Dorsolateral prefrontal cortex (tissue), 120 donors: ENCODE measurements at regions of chr21 and their contacts with region 1.

Region 1: GRCh38 chr21:31476263-31477022 is 132.4 kb upstream of the TIAM1 start:
- DNase-seq: peak in 2 of 10 donors; percentile 20 to 25
- H3K4me3 ChIP-seq: peak overlapping the region in 1 of 59 donors; percentile 10
- H3K27ac ChIP-seq: peak overlapping the region in 52 of 59 donors; percentile 1 to 100 (median 54)
- H3K27me3 ChIP-seq: no peaks in the 10 kb centered on the region
- CTCF ChIP-seq: peak in 31 of 56 donors; percentile 10 to 48 (median 30)

Region 2: DNA sequence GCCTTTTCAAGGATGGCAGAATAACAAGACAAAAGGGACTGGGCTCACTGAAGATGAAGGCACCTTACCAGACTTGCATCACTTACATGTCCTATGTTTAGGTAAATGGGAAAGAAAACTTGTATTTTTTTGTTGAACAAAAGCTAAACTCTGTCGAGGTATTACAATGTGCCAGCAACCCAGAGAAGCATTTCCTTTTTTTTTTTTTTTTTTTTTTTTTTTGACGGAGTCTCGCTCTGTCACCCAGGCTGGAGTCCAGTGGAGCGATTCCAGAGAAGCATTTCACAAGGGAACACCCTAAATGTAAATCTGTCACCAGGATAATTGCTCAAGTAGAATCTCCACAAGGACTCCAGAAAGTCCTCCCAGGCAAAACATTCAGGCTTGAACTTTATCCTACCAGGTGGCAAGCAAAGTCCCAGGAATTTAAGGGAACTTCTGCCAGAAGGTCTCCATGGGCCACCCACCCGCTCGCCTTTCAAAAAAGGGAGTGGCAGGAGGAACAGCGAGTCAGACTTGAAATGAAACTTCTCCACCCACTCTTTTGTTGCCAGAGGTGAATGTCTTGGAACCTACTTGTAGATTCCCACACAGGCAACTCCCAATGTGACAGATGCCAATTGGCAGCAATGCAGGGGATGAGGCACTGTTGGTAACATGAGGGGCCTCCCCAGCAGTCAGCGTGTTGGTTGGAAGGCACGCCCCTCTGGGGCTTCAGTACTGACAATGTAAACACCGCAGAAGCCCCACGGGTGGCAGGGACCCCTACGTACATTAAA is 257.4 kb before region 1 on chr21:
- intact Hi-C with region 1: loop called in 1 of 2 experiments (anchors 10 kb)
- DNase-seq: no peak
- H3K4me3 ChIP-seq: no peak overlapping the region
- H3K27ac ChIP-seq: peak overlapping the region in 1 of 59 donors; percentile 21
- H3K27me3 ChIP-seq: no peaks in the 10 kb centered on the region
- CTCF ChIP-seq: no peak

Region 3: DNA sequence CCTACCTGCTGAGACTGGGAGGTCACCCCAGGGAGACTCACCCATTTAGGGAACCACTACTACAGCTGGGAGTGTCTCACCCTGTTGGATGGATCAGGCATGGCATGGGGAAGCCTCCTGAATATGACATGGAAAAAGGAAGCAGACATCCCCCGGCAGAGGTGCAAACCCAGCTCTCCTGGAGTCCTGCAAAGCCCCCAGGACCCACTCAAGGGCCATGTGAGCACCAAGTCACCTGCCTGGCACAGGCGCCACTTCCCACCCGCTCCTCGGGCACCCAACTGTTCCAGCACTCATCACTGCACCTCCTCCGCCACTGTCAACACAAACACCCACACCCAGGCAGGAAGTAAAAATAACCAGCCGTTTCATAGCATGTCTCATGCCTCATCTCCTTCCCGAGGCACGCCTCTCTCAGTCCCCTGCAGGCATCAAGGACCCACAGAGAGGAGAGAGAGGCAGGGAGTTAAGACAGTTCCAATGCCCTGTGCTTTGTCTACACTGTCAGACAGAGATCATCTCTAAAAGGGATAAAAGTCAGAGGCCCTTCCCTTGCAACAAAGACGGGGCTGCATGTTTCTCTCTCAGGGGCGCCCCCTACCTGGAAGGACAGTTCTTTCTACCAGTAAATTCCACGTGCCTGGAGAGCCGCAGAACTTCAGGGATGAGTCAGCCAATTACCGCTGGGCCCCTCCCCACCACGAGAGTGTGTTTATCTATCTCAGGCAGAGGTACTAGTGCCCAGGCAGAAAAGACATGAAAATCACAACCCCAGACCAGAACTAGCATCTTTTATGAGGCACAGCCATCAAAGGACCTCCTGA is 33.0 kb after region 1 on chr21:
- intact Hi-C with region 1: loop called in 1 of 2 experiments (anchors 5 kb)
- DNase-seq: peak in 8 of 10 donors; percentile 36 to 71 (median 66)
- H3K4me3 ChIP-seq: no peak overlapping the region
- H3K27ac ChIP-seq: peak overlapping the region in 2 of 59 donors; percentile 7 to 29
- H3K27me3 ChIP-seq: no peaks in the 10 kb centered on the region
- CTCF ChIP-seq: peak in 17 of 56 donors; percentile 7 to 35 (median 18)

Region 4: GRCh38 chr21:31514598-31514997 is 38.2 kb after region 1 on chr21:
- intact Hi-C with region 1: loop called (anchors 5 kb)
- DNase-seq: peak; percentile 41 to 90 (median 85)
- H3K4me3 ChIP-seq: peak overlapping the region in 32 of 59 donors; percentile 3 to 52 (median 28)
- H3K27ac ChIP-seq: peak overlapping the region in 52 of 59 donors; percentile 8 to 87 (median 70)
- H3K27me3 ChIP-seq: no peaks in the 10 kb centered on the region
- CTCF ChIP-seq: peak; percentile 18 to 84 (median 65)

Region 5: GRCh38 chr21:31558962-31559367 is 82.5 kb after region 1 on chr21:
- intact Hi-C with region 1: loop called in 1 of 2 experiments (anchors 5 kb)
- DNase-seq: peak; percentile 90 to 99 (median 94)
- H3K4me3 ChIP-seq: peak overlapping the region; percentile 60 to 92 (median 79)
- H3K27ac ChIP-seq: peak overlapping the region in 42 of 59 donors; percentile 14 to 90 (median 70)
- H3K27me3 ChIP-seq: peaks cover 0 to 9% (median 0%) of the 10 kb centered on the region in 45 donors
- CTCF ChIP-seq: peak in 50 of 56 donors; percentile 6 to 74 (median 48)